Esophagus muscularis mucosa (tissue), 4 donors: ENCODE measurements at regions of chr13 and their contacts with region 1.

Region 1: DNA sequence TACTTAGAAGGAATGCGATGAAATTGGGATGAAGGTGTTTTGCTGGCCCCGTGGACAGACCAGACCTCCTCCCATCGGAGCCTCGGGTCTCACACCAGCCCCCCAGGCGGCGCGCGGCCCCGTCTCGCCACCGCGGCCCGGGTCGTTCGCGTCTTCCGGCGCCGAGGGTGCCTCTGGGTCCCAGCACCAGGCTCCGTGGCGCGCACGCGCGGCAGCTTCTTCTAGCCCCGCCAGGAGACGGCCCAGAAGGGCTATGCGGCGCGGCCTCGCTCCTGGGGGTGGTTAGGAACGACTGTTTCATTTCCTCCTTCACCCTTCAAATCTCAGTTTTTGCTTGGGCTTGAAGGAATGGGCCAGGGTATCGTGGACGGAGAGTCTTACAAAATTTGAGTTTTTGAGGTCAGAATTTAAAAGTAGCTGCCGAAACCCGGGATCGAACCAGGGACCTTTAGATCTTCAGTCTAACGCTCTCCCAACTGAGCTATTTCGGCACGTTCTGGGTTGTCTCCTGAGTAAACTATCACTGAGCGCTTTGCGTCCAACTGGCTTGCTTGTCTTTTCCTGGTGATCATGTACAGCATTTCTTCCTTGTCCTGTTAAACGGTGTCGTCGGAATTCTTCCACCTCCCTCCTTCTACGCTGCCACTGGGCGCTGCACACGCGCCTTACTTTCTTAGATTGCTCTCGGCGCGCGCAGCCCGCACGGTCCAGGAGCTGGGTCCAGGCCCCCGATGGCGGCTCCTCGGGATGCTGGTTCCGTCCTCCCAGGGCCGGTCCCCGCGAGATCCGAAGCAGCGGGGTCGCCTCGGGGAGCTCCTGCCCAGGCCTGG is 46.5 kb downstream of the TGDS start:
- DNase-seq: peak; percentile 99
- H3K4me3 ChIP-seq: peak overlapping the region; percentile 71 to 79 (median 78)
- H3K27ac ChIP-seq: peak overlapping the region; percentile 91 to 98 (median 96)
- H3K4me1 ChIP-seq: peaks cover 15 to 20% (median 17%) of the 10 kb centered on the region in 4 donors
- H3K27me3 ChIP-seq: no peaks in the 10 kb centered on the region
- CTCF ChIP-seq: peak in 1 of 3 experiments; percentile 1
- EP300 ChIP-seq: no peak
- POLR2A ChIP-seq: no peak

Region 2: DNA sequence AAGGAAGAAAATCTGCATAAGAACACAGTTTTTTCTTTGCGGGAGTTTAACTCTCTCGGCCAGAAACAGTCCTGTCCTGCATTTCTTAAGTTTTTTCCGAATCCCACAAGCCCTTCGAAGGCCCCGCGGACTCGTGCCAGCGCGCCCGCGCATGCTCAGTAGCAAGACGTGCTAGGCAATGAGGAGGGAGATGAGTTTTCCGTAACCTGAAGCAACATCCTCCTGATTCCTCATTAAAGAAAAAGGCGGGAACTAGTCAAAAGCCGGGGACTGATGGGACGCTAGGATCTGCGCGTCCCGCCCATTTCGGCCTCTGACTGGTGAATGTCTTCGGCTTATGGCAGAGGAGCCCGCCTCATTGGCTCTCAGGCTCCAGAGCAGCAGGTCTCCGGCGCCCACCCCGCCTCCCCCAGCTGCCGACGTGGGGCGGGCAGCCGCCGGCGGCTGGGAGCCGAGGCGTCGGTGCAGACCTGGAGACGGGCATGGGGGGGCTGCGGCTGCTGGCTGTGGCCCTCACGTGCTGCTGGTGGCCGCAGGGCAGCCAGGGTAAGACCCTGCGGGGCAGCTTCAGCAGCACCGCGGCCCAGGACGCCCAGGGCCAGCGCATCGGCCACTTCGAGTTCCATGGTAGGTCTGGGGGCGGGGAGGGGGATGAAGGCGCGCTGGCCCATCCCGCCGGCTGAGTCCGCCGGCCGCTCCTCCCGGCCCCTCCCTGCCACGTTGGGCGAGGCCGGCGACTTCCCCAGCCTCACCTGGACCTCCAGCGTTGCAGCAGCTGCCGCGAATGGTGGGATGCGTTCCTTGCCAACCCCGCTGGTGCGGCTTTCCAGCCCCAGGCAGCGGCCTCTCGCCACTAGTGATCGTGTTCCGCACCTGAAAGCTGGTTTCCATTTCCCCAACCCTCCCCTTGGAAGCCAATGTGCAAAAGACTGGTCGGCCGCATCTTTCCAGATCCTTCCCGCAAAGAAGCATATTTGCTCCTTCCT is 52.3 kb after region 1 on chr13 and contains the start of gene GPR180:
- intact Hi-C with region 1: loop called (anchors 5 kb)
- DNase-seq: peak; percentile 99
- H3K4me3 ChIP-seq: peak within 1 kb of the TSS; percentile 81 to 94 (median 90)
- H3K27ac ChIP-seq: peak within 1 kb of the TSS; percentile 85 to 92 (median 88)
- H3K4me1 ChIP-seq: peaks cover 6 to 13% (median 7%) of the 10 kb centered on the region in 4 donors
- H3K27me3 ChIP-seq: no peaks in the 10 kb centered on the region
- CTCF ChIP-seq: no peak
- EP300 ChIP-seq: no peak
- POLR2A ChIP-seq: peak; percentile 50
- total RNA-seq, gene GPR180: 2.7 to 4.7 (median 4.4) TPM